GM12878 (cell line): ENCODE measurements at regions of chr12 and their contacts with region 1.

Region 1: GRCh38 chr12:9731797-9732196 is 1.1 kb downstream of the CLECL1 start:
- DNase-seq: no peak
- ATAC-seq: peak; percentile 73
- H3K4me3 ChIP-seq: peak overlapping the region; percentile 80
- H3K27ac ChIP-seq: peak overlapping the region; percentile 84
- H3K4me1 ChIP-seq: peaks cover 7% of the 10 kb centered on the region; the same call in 1 of the 2 replicates
- H3K27me3 ChIP-seq: no peaks in the 10 kb centered on the region
- CTCF ChIP-seq: no peak
- EP300 ChIP-seq: no peak
- POLR2A ChIP-seq: no peak
- RAD21 ChIP-seq: 0 out of 2 replicates have a peak, but pooled peaks have one; percentile 12

Region 2: GRCh38 chr12:9721394-9722092 is 10.3 kb before region 1 on chr12:
- CTCF ChIA-PET with region 1: interaction called, 3 read pairs
- POLR2A ChIA-PET with region 1: interaction called, 8 read pairs
- RAD21 ChIA-PET with region 1: interaction called, 16 read pairs
- SMC1A ChIA-PET with region 1: interaction called, 4 read pairs
- in situ Hi-C with region 1: no loop called
- intact Hi-C with region 1: no loop called
- DNase-seq: peak; percentile 77
- ATAC-seq: peak; percentile 71
- H3K4me3 ChIP-seq: 0 out of 2 replicates have a peak overlapping the region, but pooled peaks have one; percentile 3
- H3K27ac ChIP-seq: peak overlapping the region; percentile 88
- H3K4me1 ChIP-seq: peaks cover 51% of the 10 kb centered on the region
- H3K27me3 ChIP-seq: no peaks in the 10 kb centered on the region; a peak in 1 of 4 replicates
- CTCF ChIP-seq: no peak
- EP300 ChIP-seq: peak; percentile 29 to 58; a peak in 2 of 4 replicates
- POLR2A ChIP-seq: peak; percentile 41; the same call in 1 of the 2 replicates
- RAD21 ChIP-seq: 0 out of 2 replicates have a peak, but pooled peaks have one; percentile 1

Region 3: GRCh38 chr12:10082117-10082874 is 350.5 kb after region 1 on chr12:
- CTCF ChIA-PET with region 1: no interaction called
- POLR2A ChIA-PET with region 1: no interaction called
- RAD21 ChIA-PET with region 1: no interaction called
- SMC1A ChIA-PET with region 1: no interaction called
- in situ Hi-C with region 1: no loop called
- intact Hi-C with region 1: no loop called
- DNase-seq: no peak
- ATAC-seq: no peak
- H3K4me3 ChIP-seq: no peak overlapping the region
- H3K27ac ChIP-seq: no peak overlapping the region
- H3K4me1 ChIP-seq: no peaks in the 10 kb centered on the region
- H3K27me3 ChIP-seq: no peaks in the 10 kb centered on the region
- CTCF ChIP-seq: no peak
- EP300 ChIP-seq: no peak
- POLR2A ChIP-seq: no peak
- RAD21 ChIP-seq: no peak